HEK293 (cell line): ENCODE measurements at regions of chr4 and their contacts with region 1.

Region 1: DNA sequence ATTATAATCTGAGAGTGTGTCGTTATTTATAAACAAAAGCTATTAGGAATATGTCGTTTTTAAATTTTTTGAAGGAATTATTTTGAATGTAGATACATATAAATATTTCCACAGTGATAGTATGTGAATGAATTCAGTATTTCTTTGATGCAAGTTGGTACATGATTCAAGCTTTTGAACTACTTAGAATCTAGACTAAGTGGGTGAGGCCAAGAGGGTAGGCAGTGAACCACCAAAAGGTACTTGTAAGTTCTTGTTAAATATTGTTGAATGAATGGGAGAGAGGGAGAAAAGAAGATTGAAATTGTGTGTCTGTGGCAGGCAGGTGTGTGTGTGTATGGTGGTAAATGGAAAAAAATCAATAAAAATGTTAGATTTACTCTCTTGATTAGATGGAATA is 69.6 kb downstream of the ARFIP1 start:
- H3K4me3 ChIP-seq: no peak overlapping the region
- H3K27ac ChIP-seq: no peak overlapping the region
- H3K4me1 ChIP-seq: no peaks in the 10 kb centered on the region; the same call in 1 of the 2 replicates
- CTCF ChIP-seq: no peak

Region 2: DNA sequence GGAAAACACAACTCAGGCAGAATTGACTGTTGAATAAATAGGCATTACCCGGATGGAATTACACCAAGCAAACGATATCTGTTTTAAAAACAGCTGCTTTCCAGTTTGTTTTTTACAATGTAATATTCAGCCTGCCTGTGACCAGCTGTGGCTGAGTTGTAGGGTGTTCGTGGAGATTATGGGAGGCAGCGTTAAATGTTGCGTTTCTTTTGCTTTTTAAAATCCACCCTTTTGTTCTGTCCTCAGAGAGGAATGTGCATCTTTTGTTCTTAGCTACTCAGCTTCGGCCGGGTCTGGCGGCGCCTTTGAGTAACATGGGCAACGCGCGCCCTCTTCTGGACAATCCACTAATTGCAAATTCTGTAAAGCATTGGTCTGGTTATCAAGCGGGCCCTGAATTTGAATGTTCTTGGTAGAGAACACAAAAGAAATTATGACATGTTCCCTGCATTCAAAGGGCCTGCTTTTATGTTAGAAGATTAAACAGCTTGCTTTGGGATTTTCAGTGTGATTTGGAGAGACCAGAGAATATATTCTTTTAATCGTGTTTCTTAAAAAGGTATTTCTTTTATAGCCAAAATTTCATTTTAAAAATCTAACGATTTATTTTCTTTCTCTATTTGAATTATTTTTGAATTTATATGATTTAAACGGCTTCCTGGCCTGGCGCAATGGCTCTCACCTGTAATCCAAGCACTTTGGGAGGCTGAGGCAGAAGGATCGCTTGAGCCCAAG is 278.6 kb after region 1 on chr4:
- CTCF ChIA-PET with region 1: interaction called, 38 read pairs
- POLR2A ChIA-PET with region 1: no interaction called
- H3K4me3 ChIP-seq: no peak overlapping the region
- H3K27ac ChIP-seq: no peak overlapping the region
- H3K4me1 ChIP-seq: no peaks in the 10 kb centered on the region
- CTCF ChIP-seq: peak; percentile 43; the same call in 1 of the 2 replicates